ENCODE measurements at regions of chr22 and their contacts with region 1.

Region 1: GRCh38 chr22:44710474-44711457 is 8.8 kb downstream of the PRR5 start:
- DNase-seq: peak; percentile 30 to 80 (median 60)
- ATAC-seq: peak; percentile 74 to 86
- H3K4me3 Mint-ChIP-seq: peak overlapping the region; percentile 84 to 93 (median 89)
- H3K27ac Mint-ChIP-seq: peak overlapping the region; percentile 65 to 98 (median 94)
- H3K4me1 Mint-ChIP-seq: peaks cover 27 to 71% (median 65%) of the 10 kb centered on the region in 4 donors
- H3K27me3 Mint-ChIP-seq: no peaks in the 10 kb centered on the region

Region 2: DNA sequence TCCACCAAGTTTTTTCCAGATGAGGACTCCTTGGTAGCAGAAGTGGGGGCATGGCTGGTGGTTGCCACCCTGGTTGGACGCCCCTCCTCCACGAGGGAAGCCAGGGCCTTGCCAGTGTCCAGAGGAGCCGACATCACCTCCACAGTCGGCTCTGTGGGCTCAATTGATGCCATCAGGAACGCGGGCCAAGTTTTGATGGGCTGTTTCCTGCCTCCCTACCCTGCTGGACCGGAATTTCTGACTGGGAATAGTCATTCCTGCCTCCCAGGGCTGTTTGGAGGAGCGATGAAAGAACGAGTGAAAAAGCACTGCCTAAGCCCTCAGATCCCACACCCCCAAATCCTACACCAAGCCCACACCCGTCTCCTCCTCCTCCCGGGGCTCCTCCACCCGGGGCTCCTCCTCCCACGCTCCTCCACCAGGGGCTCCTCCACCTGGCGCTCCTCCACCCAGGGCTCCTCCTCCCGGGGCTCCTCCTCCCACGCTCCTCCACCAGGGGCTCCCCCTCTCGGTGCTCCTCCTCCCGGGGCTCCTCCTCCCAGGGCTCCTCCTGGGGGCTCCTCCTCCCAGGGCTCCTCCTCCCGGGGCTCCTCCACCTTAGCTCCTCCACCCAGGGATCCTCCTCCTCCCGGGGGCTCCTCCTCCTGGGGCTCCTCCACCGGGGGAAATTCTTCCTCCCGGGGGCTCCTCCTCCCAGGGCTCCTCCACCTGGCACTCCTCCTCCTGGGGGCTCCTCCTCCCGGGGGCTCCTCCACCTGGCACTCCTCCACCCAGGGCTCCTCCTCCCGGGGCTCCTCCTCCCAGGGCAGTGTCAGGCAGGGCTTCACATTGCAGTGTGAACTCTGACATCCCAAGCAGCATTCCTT is 18.7 kb before region 1 on chr22:
- POLR2A ChIA-PET with region 1: no interaction called
- DNase-seq: no peak
- ATAC-seq: no peak
- H3K4me3 Mint-ChIP-seq: no peak overlapping the region
- H3K27ac Mint-ChIP-seq: peak overlapping the region in 2 of 10 donors; percentile 25 to 38
- H3K4me1 Mint-ChIP-seq: peaks cover 0 to 6% (median 2%) of the 10 kb centered on the region in 4 donors
- H3K27me3 Mint-ChIP-seq: no peaks in the 10 kb centered on the region

Region 3: DNA sequence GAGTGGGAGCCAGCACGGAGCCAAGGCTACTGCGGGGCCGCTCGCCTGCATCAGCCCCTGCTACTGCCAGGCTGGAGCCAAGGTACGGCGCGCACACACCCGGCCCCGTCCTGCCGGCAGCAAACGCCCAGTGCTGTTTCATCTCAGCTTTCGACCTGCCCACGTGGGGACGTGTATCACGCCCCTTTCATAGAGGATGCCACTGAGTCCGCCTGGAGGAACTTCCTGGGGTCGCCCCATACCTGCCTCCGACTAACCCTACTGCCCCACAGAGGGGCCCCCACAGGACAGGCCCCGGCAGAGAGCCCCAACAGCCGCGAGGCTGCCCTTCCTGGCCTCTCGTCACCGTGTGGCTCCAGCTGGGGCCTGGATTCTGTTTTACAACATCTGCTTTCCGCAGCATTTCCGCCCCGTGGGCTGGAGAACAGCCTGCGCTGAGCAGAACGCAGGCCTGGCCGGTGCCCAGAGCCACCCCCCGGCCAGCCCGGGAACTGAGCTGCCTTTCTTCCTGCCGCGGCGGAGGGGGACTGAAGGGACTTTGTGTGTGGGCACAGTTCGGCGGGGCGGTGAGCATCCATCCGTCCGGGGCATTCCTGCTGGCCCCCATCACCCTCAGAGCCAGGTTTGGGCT is 18.7 kb after region 1 on chr22:
- POLR2A ChIA-PET with region 1: interaction called, 10 read pairs
- DNase-seq: peak in 5 of 10 donors; percentile 19 to 35 (median 30)
- ATAC-seq: peak; percentile 75 to 81
- H3K4me3 Mint-ChIP-seq: peak overlapping the region in 5 of 10 donors; percentile 8 to 67 (median 63)
- H3K27ac Mint-ChIP-seq: peak overlapping the region in 6 of 10 donors; percentile 31 to 80 (median 62)
- H3K4me1 Mint-ChIP-seq: peaks cover 5 to 23% (median 12%) of the 10 kb centered on the region in 4 donors
- H3K27me3 Mint-ChIP-seq: no peaks in the 10 kb centered on the region

Region 4: DNA sequence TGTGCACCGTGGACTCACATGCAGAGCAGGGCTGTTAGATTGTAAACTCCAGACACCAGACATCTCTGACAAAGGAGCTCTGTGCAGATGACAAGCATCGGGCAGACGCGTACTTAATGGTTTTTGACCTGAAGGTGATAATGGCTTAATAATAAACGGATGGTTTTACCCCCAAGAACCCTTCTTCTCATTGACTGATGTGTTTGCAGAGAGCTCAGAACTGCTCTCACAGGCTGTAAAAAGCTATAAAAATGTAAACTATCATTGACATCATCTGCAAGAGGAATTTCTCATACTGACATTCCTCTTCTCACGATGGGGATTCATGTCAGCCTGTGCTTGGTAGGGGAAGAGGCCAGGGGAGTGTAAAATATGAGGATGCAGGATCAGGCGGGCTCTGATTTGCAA is 33.0 kb after region 1 on chr22:
- POLR2A ChIA-PET with region 1: no interaction called
- DNase-seq: no peak
- ATAC-seq: no peak
- H3K4me3 Mint-ChIP-seq: no peak overlapping the region
- H3K27ac Mint-ChIP-seq: no peak overlapping the region
- H3K4me1 Mint-ChIP-seq: peaks cover 0 to 7% (median under 1%) of the 10 kb centered on the region in 4 donors
- H3K27me3 Mint-ChIP-seq: peaks cover 0 to 7% (median 0%) of the 10 kb centered on the region in 5 donors